Left ventricle myocardium inferior (tissue), 1 donor: ENCODE measurements at regions of chr13 and their contacts with region 1.

Region 1: GRCh38 chr13:33931397-33932311 is 113.7 kb downstream of the RFC3 start:
- DNase-seq: no peak
- H3K4me3 ChIP-seq: no peak overlapping the region
- H3K27ac ChIP-seq: no peak overlapping the region
- H3K4me1 ChIP-seq: peaks cover 5% of the 10 kb centered on the region
- H3K27me3 ChIP-seq: no peaks in the 10 kb centered on the region
- CTCF ChIP-seq: peak; percentile 67

Region 2: DNA sequence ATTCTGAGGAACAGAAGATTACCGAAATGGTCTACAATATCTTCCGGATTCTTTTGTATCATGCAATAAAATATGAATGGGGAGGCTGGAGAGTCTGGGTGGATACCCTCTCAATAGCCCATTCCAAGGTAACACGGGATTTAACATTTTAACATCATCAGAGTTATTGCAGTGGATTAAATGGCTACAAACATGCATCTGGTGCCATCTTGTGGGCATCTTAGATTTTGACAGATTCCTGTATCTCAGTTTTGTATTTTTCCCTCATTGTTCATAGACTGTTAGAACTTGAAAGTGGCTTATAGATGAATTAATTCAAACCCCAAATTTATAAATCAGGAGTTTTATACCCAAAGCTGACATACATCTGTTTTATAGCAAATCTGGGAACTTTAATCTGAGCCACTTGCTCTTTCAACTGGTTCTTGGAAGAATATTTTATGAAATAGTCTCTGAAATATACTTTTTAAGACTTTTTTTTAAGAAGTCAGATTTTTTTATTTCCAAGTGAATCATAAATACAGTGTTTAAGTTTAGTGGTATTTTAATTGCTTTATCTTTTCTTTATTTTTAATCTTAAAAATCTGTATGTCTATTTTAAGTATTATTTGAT is 1225.6 kb after region 1 on chr13:
- intact Hi-C with region 1: loop called (anchors 1 kb)
- DNase-seq: no peak
- H3K4me3 ChIP-seq: no peak overlapping the region
- H3K27ac ChIP-seq: no peak overlapping the region
- H3K4me1 ChIP-seq: peaks cover 14% of the 10 kb centered on the region
- H3K27me3 ChIP-seq: no peaks in the 10 kb centered on the region
- CTCF ChIP-seq: peak; percentile 80